ENCODE measurements at regions of chr10 and their contacts with region 1.

Region 1: DNA sequence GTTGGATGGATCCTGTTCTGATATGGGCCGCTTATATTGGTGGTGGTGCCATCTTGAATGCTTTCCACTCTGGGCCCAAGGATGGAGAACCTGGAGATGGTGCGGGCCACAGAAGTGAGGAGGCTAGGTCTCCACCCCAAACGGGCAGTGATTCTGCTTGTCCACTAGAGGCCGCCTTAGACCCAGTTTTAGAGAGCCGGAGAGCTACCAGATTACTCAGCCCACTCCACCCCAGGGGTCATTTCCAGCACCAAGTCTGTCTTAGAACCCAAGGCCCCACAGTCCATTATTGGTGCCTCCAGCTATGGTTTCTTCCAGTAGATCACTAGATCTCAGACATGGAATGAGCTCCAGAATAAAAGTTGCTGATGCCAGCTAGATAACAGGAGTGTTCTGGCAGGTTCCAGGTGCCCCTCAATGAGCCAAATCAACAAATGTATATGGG is 11.8 kb upstream of the CAMK2G start:
- DNase-seq: peak; percentile 81
- ATAC-seq: peak; percentile 93
- H3K4me3 Mint-ChIP-seq: no peak overlapping the region
- H3K27ac Mint-ChIP-seq: no peak overlapping the region
- H3K4me1 Mint-ChIP-seq: peaks cover 7% of the 10 kb centered on the region
- H3K27me3 Mint-ChIP-seq: peaks cover 4% of the 10 kb centered on the region

Region 2: GRCh38 chr10:73263948-73264347 is 622.2 kb before region 1 on chr10:
- CTCF ChIA-PET with region 1: no interaction called
- POLR2A ChIA-PET with region 1: no interaction called
- DNase-seq: no peak
- ATAC-seq: no peak
- H3K4me3 Mint-ChIP-seq: no peak overlapping the region
- H3K27ac Mint-ChIP-seq: no peak overlapping the region
- H3K4me1 Mint-ChIP-seq: peaks cover 6% of the 10 kb centered on the region
- H3K27me3 Mint-ChIP-seq: peaks cover 4% of the 10 kb centered on the region

Region 3: GRCh38 chr10:73759512-73760115 is 126.5 kb before region 1 on chr10:
- CTCF ChIA-PET with region 1: no interaction called
- POLR2A ChIA-PET with region 1: no interaction called
- DNase-seq: peak; percentile 68
- ATAC-seq: peak; percentile 87
- H3K4me3 Mint-ChIP-seq: peak overlapping the region; percentile 35
- H3K27ac Mint-ChIP-seq: peak overlapping the region; percentile 91
- H3K4me1 Mint-ChIP-seq: peaks cover 46% of the 10 kb centered on the region
- H3K27me3 Mint-ChIP-seq: no peaks in the 10 kb centered on the region

Region 4: GRCh38 chr10:73848821-73849489 is 37.2 kb before region 1 on chr10:
- CTCF ChIA-PET with region 1: interaction called, 431 read pairs
- POLR2A ChIA-PET with region 1: interaction called, 4 read pairs
- DNase-seq: peak; percentile 96
- ATAC-seq: peak; percentile 99
- H3K4me3 Mint-ChIP-seq: peak overlapping the region; percentile 22
- H3K27ac Mint-ChIP-seq: peak overlapping the region; percentile 55
- H3K4me1 Mint-ChIP-seq: peaks cover 24% of the 10 kb centered on the region
- H3K27me3 Mint-ChIP-seq: no peaks in the 10 kb centered on the region

Region 5: DNA sequence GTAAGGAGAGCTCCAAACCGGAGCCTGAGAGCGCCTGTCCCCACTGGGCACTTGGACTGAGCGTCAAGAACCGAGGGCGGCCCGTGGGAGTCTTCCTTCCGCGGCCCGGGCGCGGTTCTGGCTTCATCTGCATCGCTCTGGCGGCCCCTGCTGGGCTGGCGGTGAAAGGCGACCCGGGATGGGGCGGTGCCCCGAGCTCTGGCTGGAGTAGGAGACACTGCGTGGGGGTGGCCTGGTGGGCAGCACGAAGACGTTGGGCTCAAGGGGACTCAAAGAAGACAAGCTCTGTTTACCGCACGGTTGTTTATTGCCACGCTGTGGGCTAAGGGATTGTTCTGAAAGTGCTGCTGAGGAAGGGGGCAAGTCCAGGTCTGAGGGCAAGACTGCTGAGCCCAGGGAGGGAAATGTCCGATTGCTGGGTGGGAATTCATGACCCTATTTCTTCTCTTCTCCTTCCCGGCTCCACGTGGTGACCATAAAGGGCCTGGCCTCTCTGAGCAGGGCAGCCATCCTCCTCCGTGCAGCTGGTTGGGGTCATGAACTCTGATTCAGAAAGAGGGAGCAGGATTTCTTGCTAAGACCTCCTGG is 54.6 kb after region 1 on chr10:
- CTCF ChIA-PET with region 1: interaction called, 408 read pairs
- POLR2A ChIA-PET with region 1: interaction called, 6 read pairs
- DNase-seq: peak; percentile 89
- ATAC-seq: peak; percentile 100
- H3K4me3 Mint-ChIP-seq: peak overlapping the region; percentile 23
- H3K27ac Mint-ChIP-seq: peak overlapping the region; percentile 51
- H3K4me1 Mint-ChIP-seq: peaks cover 21% of the 10 kb centered on the region
- H3K27me3 Mint-ChIP-seq: peaks cover 18% of the 10 kb centered on the region

Region 6: GRCh38 chr10:73991884-73992245 is 105.8 kb after region 1 on chr10:
- CTCF ChIA-PET with region 1: interaction called, 14 read pairs
- POLR2A ChIA-PET with region 1: no interaction called
- DNase-seq: peak; percentile 96
- ATAC-seq: peak; percentile 100
- H3K4me3 Mint-ChIP-seq: peak overlapping the region; percentile 1
- H3K27ac Mint-ChIP-seq: peak overlapping the region; percentile 74
- H3K4me1 Mint-ChIP-seq: peaks cover 51% of the 10 kb centered on the region
- H3K27me3 Mint-ChIP-seq: peaks cover 7% of the 10 kb centered on the region

Region 7: GRCh38 chr10:74081192-74081803 is 195.2 kb after region 1 on chr10:
- CTCF ChIA-PET with region 1: interaction called, 103 read pairs
- POLR2A ChIA-PET with region 1: no interaction called
- DNase-seq: peak; percentile 64
- ATAC-seq: no peak
- H3K4me3 Mint-ChIP-seq: no peak overlapping the region
- H3K27ac Mint-ChIP-seq: peak overlapping the region; percentile 17
- H3K4me1 Mint-ChIP-seq: peaks cover 41% of the 10 kb centered on the region
- H3K27me3 Mint-ChIP-seq: no peaks in the 10 kb centered on the region

Region 8: DNA sequence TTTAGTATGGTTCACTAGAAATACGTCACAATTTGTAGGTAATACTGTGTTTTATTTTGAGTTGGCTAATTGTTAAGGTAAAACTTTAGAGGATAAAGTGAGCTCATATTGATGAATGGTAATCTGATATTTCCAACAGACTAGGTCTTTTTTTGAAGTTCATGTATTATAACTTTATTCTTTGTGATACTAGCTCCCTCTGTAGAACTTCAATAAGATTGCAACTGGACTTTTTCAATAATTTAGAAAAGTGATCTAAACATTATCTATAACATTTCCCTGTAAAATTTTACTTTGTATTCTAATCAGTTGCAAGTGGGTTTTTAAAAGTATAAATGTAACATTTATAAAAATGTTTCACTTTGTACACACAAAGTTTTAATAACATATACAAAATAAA is 348.5 kb after region 1 on chr10:
- CTCF ChIA-PET with region 1: interaction called, 12 read pairs
- POLR2A ChIA-PET with region 1: no interaction called
- DNase-seq: no peak
- ATAC-seq: no peak
- H3K4me3 Mint-ChIP-seq: no peak overlapping the region
- H3K27ac Mint-ChIP-seq: no peak overlapping the region
- H3K4me1 Mint-ChIP-seq: peaks cover 13% of the 10 kb centered on the region
- H3K27me3 Mint-ChIP-seq: no peaks in the 10 kb centered on the region